Esophagus squamous epithelium (tissue), 5 donors: ENCODE measurements at regions of chr5 and their contacts with region 1.

Region 1: GRCh38 chr5:72822944-72823343 is 6.5 kb downstream of the TNPO1 start:
- DNase-seq: no peak
- H3K4me3 ChIP-seq: no peak overlapping the region
- H3K27ac ChIP-seq: no peak overlapping the region
- H3K4me1 ChIP-seq: peaks cover 8 to 38% (median 20%) of the 10 kb centered on the region in 3 donors
- H3K27me3 ChIP-seq: no peaks in the 10 kb centered on the region
- CTCF ChIP-seq: no peak
- POLR2A ChIP-seq: no peak

Region 2: GRCh38 chr5:72611118-72611730 is 211.7 kb before region 1 on chr5:
- intact Hi-C with region 1: loop called (anchors 10 kb)
- DNase-seq: peak; percentile 7
- H3K4me3 ChIP-seq: no peak overlapping the region
- H3K27ac ChIP-seq: no peak overlapping the region
- H3K4me1 ChIP-seq: peaks cover 0 to 14% (median 0%) of the 10 kb centered on the region in 3 donors
- H3K27me3 ChIP-seq: no peaks in the 10 kb centered on the region
- CTCF ChIP-seq: peak; percentile 76 to 93 (median 88)
- POLR2A ChIP-seq: no peak